PC-3 (cell line): ENCODE measurements at regions of chr2 and their contacts with region 1.

Region 1: DNA sequence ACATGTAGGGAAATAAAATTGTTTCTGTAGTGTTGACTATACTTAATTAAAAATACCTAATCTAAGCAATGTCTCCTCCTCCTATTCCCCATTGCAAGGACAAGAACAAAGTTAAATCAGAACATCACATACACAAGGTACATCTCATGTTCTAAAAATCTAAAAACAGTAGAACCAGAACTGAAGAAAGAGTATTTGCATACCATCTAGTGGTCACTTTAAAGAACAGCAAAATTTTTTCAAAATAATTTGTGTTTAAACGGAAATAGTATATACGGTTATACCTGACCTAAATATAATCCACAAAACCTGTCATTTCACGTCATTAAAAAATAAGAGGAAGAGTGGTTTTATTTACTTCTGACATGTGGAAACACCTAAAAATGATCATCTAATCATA is 294.3 kb upstream of the KCNH7 start:
- DNase-seq: peak; percentile 43
- ATAC-seq: no peak
- H3K4me3 ChIP-seq: no peak overlapping the region
- H3K27ac ChIP-seq: no peak overlapping the region
- H3K4me1 ChIP-seq: no peaks in the 10 kb centered on the region
- H3K27me3 ChIP-seq: peaks cover 7% of the 10 kb centered on the region; the same call in 1 of the 2 replicates
- CTCF ChIP-seq: peak; percentile 70

Region 2: GRCh38 chr2:162890690-162891311 is 242.0 kb before region 1 on chr2:
- CTCF ChIA-PET with region 1: no interaction called
- POLR2A ChIA-PET with region 1: no interaction called
- intact Hi-C with region 1: loop called (anchors 1 kb)
- DNase-seq: peak; percentile 71
- ATAC-seq: peak; percentile 87
- H3K4me3 ChIP-seq: peak overlapping the region; percentile 41; the same call in 1 of the 2 replicates
- H3K27ac ChIP-seq: no peak overlapping the region
- H3K4me1 ChIP-seq: no peaks in the 10 kb centered on the region
- H3K27me3 ChIP-seq: peaks cover 15% of the 10 kb centered on the region
- CTCF ChIP-seq: peak; percentile 95